ENCODE measurements at regions of chr9 and their contacts with region 1.

Region 1: GRCh38 chr9:20622330-20623020 is at the start of gene MLLT3:
- DNase-seq: peak; percentile 97
- ATAC-seq: peak; percentile 85
- total RNA-seq, gene MLLT3: 44.1 to 62.7 TPM

Region 2: GRCh38 chr9:19875291-19875920 is 747.1 kb before region 1 on chr9:
- intact Hi-C with region 1: no loop called
- DNase-seq: no peak
- ATAC-seq: no peak

Region 3: GRCh38 chr9:20552874-20553575 is 69.5 kb before region 1 on chr9:
- intact Hi-C with region 1: loop called in 1 of 2 experiments (anchors 5 kb)
- DNase-seq: no peak
- ATAC-seq: no peak

Region 4: DNA sequence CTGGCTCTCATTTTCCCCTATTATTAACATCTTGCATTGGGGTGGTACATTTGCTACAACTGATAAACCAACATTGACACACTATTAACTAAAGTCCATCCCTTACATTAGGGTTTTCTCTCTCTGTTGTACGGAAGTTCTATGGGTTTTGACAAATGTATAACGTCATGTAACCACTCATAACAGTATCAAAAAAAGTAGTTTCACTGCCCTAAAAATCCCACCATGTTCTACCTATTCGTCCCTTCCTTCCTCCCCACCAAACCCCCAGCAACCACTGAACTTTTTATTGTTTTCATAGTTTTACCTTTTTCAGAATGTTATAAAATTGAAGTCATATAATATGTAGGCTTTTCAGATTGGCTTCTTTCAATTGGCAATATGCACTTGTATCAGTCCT is 40.3 kb before region 1 on chr9:
- intact Hi-C with region 1: no loop called
- DNase-seq: no peak
- ATAC-seq: no peak

Region 5: GRCh38 chr9:20941174-20941690 is 318.8 kb after region 1 on chr9:
- intact Hi-C with region 1: loop called in 1 of 2 experiments (anchors 5 kb)
- DNase-seq: peak; percentile 31 to 44
- ATAC-seq: peak; percentile 99

Region 6: GRCh38 chr9:20962536-20963225 is 340.2 kb after region 1 on chr9:
- intact Hi-C with region 1: no loop called
- DNase-seq: no peak
- ATAC-seq: no peak